ENCODE measurements at regions of chr5 and their contacts with region 1.

Region 1: DNA sequence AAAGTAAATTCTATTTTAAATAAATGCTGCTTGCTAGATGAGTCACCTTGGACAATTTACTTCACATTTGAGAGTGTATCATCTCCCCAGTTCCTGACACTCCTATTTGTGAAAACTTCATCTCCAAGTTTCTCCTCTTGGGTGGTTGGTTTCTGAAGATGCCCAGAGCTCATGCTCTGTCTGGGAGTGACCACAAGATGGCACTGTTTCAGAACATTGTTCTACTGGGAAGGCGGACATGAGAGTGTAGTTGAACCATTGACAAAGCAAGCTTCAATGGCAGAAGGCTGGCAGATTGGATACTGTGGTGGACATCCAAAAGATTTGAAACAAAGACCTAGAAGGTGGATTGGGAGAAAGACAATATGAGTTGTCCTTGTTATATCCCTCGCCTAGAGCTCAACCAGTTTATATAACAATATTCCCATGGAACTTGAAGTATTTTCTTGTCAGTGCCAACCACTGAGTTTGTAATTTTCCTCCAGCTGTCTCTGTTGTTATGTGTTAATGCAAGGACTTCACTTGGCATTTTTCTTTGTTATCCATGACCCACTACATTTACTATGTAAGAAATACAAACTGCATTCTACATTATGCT is 234.3 kb upstream of the ANKH start:
- DNase-seq: peak in 3 of 9 experiments; percentile 11 to 35 (median 28)
- ATAC-seq: no peak
- H3K4me3 ChIP-seq: no peak overlapping the region
- H3K4me3 Mint-ChIP-seq: no peak overlapping the region
- H3K27ac ChIP-seq: no peak overlapping the region
- H3K27ac Mint-ChIP-seq: no peak overlapping the region
- H3K4me1 ChIP-seq: no peaks in the 10 kb centered on the region
- H3K4me1 Mint-ChIP-seq: peaks cover 4% of the 10 kb centered on the region
- H3K27me3 ChIP-seq: no peaks in the 10 kb centered on the region
- H3K27me3 Mint-ChIP-seq: peaks cover 3% of the 10 kb centered on the region
- CTCF ChIP-seq: peak; percentile 45

Region 2: GRCh38 chr5:15116996-15117395 is 11.1 kb after region 1 on chr5:
- CTCF ChIA-PET with region 1: interaction called, 11 read pairs
- POLR2A ChIA-PET with region 1: no interaction called
- intact Hi-C with region 1: no loop called
- DNase-seq: no peak
- ATAC-seq: no peak
- H3K4me3 ChIP-seq: no peak overlapping the region
- H3K4me3 Mint-ChIP-seq: no peak overlapping the region
- H3K27ac ChIP-seq: no peak overlapping the region
- H3K27ac Mint-ChIP-seq: no peak overlapping the region
- H3K4me1 ChIP-seq: no peaks in the 10 kb centered on the region
- H3K4me1 Mint-ChIP-seq: no peaks in the 10 kb centered on the region
- H3K27me3 ChIP-seq: no peaks in the 10 kb centered on the region
- H3K27me3 Mint-ChIP-seq: no peaks in the 10 kb centered on the region
- CTCF ChIP-seq: no peak

Region 3: DNA sequence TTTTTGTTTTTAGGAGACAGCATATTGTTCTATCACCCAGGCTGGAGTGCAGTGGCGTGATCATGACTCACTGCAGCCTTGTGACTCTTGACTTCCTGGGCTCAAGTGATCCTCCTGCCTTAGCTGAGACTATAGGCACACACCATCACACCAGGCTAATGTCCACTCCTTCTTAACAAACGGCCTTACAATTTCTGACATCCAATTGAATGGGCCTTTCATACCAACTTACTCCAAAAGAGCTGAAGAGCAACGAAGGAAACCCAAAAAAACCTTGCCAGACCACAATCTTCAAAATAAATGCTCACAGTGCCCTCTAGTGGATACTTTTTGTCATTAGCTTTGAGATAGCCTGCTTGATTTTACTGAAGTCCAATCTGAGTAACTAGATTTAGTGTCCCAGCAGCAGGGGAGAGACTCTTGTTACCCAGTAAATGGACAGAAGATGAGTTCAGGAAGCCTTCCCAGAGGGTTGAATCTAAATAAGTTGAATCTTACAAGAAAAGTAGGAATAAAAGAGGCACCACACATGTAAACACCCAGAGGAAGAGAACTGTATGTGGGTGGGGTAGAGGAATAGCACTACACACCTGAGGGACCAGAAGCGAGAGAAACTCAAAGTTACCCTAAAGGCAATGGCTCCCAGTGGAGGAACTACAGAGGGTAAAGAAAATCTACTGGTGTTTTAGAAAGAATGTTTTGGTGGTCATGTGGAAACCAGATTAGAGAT is 1350.4 kb after region 1 on chr5:
- CTCF ChIA-PET with region 1: no interaction called
- POLR2A ChIA-PET with region 1: no interaction called
- intact Hi-C with region 1: loop called in 1 of 2 experiments (anchors 10 kb)
- DNase-seq: peak in 4 of 9 experiments; percentile 20 to 80 (median 51)
- ATAC-seq: peak; percentile 76
- H3K4me3 ChIP-seq: no peak overlapping the region
- H3K4me3 Mint-ChIP-seq: peak overlapping the region; percentile 29
- H3K27ac ChIP-seq: peak overlapping the region in 1 of 2 experiments; percentile 41
- H3K27ac Mint-ChIP-seq: peak overlapping the region; percentile 65
- H3K4me1 ChIP-seq: peaks cover 38% of the 10 kb centered on the region
- H3K4me1 Mint-ChIP-seq: peaks cover 67% of the 10 kb centered on the region
- H3K27me3 ChIP-seq: no peaks in the 10 kb centered on the region
- H3K27me3 Mint-ChIP-seq: no peaks in the 10 kb centered on the region
- CTCF ChIP-seq: peak; percentile 77

Measured in CD8-positive, alpha-beta T cell (primary cell).